Gastrocnemius medialis (tissue), 4 donors: ENCODE measurements at regions of chr15 and their contacts with region 1.

Region 1: DNA sequence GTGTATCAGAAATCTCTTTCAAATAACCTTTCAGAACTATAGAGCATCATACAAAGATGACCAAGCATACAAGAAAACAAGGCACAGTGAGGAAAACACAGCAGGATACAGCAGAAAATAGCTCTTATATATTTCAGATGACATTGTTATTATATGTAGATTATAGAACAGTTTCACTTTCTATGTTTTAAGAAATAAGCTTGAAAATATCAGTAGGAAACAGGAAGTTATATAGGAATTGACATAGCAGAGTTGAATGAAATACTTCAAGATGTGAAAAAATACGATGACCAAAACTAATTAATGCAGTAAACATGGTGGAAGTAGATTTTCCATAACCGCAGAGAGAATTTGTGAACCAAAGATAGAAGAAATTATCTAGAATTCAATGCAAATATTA is 75.2 kb downstream of the LYSMD4 start:
- DNase-seq: no peak
- ATAC-seq: no peak
- H3K4me3 ChIP-seq: no peak overlapping the region
- H3K27ac ChIP-seq: no peak overlapping the region
- H3K4me1 ChIP-seq: peaks cover 12 to 32% of the 10 kb centered on the region in 2 donors
- H3K27me3 ChIP-seq: no peaks in the 10 kb centered on the region
- CTCF ChIP-seq: no peak
- POLR2A ChIP-seq: no peak

Region 2: DNA sequence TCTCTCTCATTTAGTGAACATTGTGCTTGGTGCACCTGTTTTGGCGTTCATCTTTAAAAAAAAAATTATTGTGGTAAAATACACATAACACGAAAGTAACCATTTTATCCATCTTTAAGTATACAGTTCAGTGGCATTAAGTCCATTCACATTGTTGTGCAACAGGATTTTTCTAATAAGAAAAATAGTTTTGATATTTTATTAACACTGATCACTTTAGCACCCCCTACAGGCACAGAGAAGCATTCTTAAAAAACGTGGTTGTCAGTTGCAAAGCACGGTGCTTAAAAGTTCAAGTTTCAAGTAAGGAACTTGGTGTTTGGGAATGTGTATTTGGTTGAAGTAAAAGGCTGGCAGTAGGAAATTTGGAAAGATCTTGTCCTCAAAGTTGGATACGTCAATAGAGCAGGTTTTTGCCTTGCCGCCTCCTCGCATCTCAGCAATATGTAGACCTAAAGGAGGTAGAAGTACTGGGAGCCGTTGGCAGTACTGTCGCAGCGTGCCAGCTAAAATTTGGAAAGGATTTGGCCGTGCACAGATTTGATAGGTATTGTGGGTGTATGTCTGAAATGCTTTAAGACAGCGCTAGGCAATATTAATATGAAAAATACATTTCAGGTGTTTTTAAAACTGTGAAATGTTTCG is 296.3 kb before region 1 on chr15:
- in situ Hi-C with region 1: no loop called
- intact Hi-C with region 1: no loop called
- DNase-seq: no peak
- ATAC-seq: no peak
- H3K4me3 ChIP-seq: no peak overlapping the region
- H3K27ac ChIP-seq: no peak overlapping the region
- H3K4me1 ChIP-seq: no peaks in the 10 kb centered on the region
- H3K27me3 ChIP-seq: no peaks in the 10 kb centered on the region
- CTCF ChIP-seq: peak; percentile 9 to 44 (median 16)
- POLR2A ChIP-seq: no peak

Region 3: GRCh38 chr15:99402014-99402729 is 255.8 kb before region 1 on chr15:
- in situ Hi-C with region 1: no loop called
- intact Hi-C with region 1: no loop called
- DNase-seq: no peak
- ATAC-seq: no peak
- H3K4me3 ChIP-seq: no peak overlapping the region
- H3K27ac ChIP-seq: peak overlapping the region in 1 of 4 donors; percentile 25
- H3K4me1 ChIP-seq: peaks cover 0 to 4% of the 10 kb centered on the region in 2 donors
- H3K27me3 ChIP-seq: no peaks in the 10 kb centered on the region
- CTCF ChIP-seq: no peak
- POLR2A ChIP-seq: no peak

Region 4: DNA sequence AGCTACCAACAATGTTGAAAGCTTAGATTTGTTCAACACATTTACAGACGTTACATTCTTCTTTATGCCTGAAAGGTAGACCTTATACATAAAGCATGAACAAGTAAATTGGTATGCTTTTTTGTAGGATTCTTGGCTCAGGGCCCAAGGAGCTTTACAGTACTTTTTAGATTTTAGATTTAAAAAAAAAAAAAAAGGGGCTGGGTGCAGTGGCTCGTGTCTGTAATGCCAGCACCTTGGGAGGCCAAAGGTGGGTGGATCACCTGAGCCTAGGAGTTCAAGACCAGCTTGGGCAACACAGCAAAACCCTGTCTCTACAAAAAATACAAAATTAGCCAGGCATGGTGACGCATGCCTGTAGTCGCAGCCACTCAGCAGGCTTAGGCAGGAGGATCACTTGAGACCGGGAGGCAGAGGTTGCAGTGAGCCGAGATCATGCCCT is 52.5 kb before region 1 on chr15:
- in situ Hi-C with region 1: no loop called
- intact Hi-C with region 1: loop called (anchors 5 kb)
- DNase-seq: no peak
- ATAC-seq: peak in 1 of 2 donors; percentile 36
- H3K4me3 ChIP-seq: no peak overlapping the region
- H3K27ac ChIP-seq: peak overlapping the region in 3 of 4 donors; percentile 11 to 55 (median 23)
- H3K4me1 ChIP-seq: peaks cover 49 to 59% of the 10 kb centered on the region in 2 donors
- H3K27me3 ChIP-seq: no peaks in the 10 kb centered on the region
- CTCF ChIP-seq: no peak
- POLR2A ChIP-seq: no peak